Ovary (tissue), 10 donors: ENCODE measurements at regions of chr9 and their contacts with region 1.

Region 1: DNA sequence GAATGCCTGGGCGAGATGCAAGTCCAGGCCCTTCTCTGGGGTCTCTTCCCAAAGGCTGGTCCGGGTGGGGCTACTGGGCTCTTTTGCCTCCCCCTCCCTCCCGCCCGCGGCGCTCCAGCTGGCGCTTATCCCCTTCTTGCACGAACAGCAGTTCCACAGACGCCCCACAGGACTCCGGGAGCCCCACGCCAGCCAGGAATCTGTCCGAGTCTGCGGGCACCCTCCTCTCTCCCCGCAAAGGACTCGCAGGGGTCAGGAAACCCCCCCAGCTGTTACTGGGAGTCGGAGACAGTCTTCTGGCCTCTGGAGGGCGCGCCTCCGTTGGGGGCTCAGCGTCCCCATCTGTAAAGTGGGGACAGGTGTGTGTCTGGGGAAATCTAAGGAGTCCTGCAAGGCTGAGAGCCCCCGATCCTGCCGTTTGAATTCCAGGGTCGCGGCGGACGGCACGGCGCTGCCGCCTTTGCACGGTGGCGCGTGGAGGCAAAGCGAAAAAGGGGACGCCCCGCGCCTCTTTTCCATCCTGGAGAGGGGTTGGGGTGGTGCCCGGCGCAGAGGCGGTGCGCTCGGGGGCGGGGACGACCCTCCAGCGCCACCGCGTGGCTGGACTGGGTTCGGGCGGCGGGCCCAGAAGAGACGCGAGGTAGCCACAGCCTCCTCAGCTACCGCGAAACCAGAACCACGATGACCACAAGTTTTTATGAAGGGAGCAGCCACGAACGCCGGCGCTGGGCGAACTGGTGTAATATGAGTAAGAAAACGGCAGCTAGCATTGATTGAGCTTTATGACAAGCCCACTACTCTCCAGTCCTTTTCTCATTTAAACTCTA is 2.9 kb upstream of the CCIN start:
- DNase-seq: peak; percentile 78 to 93 (median 84)
- H3K4me3 ChIP-seq: peak overlapping the region; percentile 45
- H3K27ac ChIP-seq: peak overlapping the region in 1 of 2 donors; percentile 39
- H3K4me1 ChIP-seq: peaks cover 5% of the 10 kb centered on the region
- H3K27me3 ChIP-seq: no peaks in the 10 kb centered on the region
- CTCF ChIP-seq: peak; percentile 93 to 94 (median 94)
- EP300 ChIP-seq: no peak
- POLR2A ChIP-seq: no peak

Region 2: GRCh38 chr9:35954942-35955546 is 211.3 kb before region 1 on chr9:
- intact Hi-C with region 1: loop called in 1 of 4 experiments (anchors 10 kb)
- DNase-seq: peak in 2 of 5 donors; percentile 25 to 66
- H3K4me3 ChIP-seq: no peak overlapping the region
- H3K27ac ChIP-seq: no peak overlapping the region
- H3K4me1 ChIP-seq: no peaks in the 10 kb centered on the region
- H3K27me3 ChIP-seq: no peaks in the 10 kb centered on the region
- CTCF ChIP-seq: peak; percentile 45 to 73 (median 65)
- EP300 ChIP-seq: no peak
- POLR2A ChIP-seq: no peak

Region 3: DNA sequence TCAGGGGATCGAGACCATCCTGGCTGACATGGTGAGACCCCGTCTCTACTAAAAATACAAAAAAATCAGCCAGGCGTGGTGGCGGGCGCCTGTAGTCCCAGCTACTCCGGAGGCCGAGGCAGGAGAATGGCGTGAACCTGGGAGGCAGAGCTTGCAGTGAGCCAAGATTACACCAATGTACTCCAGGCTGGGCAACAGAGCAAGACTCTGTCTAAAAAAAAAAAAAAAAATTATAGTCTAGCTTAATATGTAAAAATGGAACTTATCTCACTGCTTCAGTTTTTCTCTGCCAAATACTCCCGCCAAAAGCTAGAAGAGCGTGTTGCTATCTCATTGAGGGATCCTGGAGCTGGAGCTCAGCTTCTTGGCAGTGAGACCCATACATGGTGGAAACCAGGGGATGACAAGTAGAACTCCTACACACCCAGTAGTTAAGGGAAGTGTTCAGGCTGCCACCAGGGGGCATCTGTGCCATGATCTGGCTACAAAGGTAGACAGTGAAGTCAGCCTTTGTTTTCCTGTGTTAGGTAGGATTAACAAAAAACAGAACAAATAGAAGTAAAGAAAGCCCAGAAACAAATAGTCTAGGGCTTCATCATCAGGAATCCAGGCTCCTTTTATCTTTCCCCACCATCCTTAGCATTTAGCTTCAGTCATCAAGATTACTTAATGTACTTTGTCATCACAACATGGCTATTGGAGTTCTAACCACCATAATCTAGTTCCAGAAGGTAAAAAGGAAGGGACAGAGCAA is 63.4 kb before region 1 on chr9:
- intact Hi-C with region 1: loop called in 3 of 4 experiments (anchors 2 to 5 kb)
- DNase-seq: peak; percentile 73 to 88 (median 83)
- H3K4me3 ChIP-seq: no peak overlapping the region
- H3K27ac ChIP-seq: no peak overlapping the region
- H3K4me1 ChIP-seq: peaks cover 4% of the 10 kb centered on the region
- H3K27me3 ChIP-seq: no peaks in the 10 kb centered on the region
- CTCF ChIP-seq: peak; percentile 23 to 70 (median 44)
- EP300 ChIP-seq: no peak
- POLR2A ChIP-seq: no peak

Region 4: GRCh38 chr9:36127652-36128244 is 38.6 kb before region 1 on chr9:
- intact Hi-C with region 1: loop called in 1 of 4 experiments (anchors 10 kb)
- DNase-seq: no peak
- H3K4me3 ChIP-seq: no peak overlapping the region
- H3K27ac ChIP-seq: no peak overlapping the region
- H3K4me1 ChIP-seq: no peaks in the 10 kb centered on the region
- H3K27me3 ChIP-seq: no peaks in the 10 kb centered on the region
- CTCF ChIP-seq: no peak
- EP300 ChIP-seq: no peak
- POLR2A ChIP-seq: no peak

Region 5: DNA sequence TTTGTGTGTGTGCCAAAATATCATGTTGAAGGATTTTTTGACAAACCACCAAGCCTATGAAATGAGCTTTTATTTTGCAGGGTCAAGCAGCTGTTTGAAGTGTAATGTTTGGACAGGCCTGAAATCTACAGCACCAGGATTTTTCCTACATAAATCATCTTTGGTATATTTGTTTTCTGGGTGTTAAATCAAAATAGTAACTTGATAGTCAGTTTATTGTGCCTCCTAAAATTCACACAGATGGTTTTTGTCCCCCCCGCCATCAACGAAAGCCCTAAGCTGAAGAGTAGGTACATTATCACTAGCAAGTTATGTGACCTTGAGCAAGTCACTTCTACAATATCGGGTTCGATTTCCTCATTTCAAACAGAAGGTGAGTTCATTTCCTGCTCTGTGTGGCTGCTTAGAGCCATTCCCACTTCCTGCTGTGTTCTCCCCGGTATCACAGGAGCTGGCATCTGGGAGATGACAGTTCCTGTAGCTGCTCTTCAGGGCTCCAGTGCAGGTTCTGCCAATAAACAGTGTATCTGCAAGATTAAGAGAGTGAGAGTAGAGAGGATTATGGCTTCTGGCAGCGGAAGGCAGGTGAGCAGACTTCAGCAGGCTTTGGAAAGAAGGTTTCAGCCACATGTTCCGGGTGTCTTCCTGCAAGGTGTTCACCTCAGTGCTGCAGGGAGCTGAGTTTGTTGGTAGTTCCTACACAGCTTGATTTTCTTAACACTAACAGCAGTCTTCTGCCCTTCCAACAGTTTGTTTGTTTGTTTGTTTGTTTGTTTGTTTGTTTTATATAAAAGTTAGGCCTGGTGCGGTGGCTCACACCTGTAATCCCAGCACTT is 140.4 kb after region 1 on chr9:
- intact Hi-C with region 1: no loop called
- DNase-seq: no peak
- H3K4me3 ChIP-seq: no peak overlapping the region
- H3K27ac ChIP-seq: no peak overlapping the region
- H3K4me1 ChIP-seq: peaks cover 1% of the 10 kb centered on the region
- H3K27me3 ChIP-seq: no peaks in the 10 kb centered on the region
- CTCF ChIP-seq: no peak
- EP300 ChIP-seq: no peak
- POLR2A ChIP-seq: no peak